CD14-positive monocyte (primary cell): ENCODE measurements at regions of chr7 and their contacts with region 1.

Region 1: GRCh38 chr7:156892821-156893706 is at the start of gene LMBR1:
- DNase-seq: peak; percentile 91 to 95 (median 94)
- H3K4me3 ChIP-seq: peak within 1 kb of the TSS; percentile 58 to 85 (median 78)
- H3K4me3 Mint-ChIP-seq: peak within 1 kb of the TSS; percentile 88 to 92
- H3K27ac ChIP-seq: peak within 1 kb of the TSS; percentile 85 to 92
- H3K27ac Mint-ChIP-seq: peak within 1 kb of the TSS; percentile 88 to 95 (median 93)
- H3K4me1 ChIP-seq: peaks cover 41 to 47% of the 10 kb centered on the region in 2 donors
- H3K4me1 Mint-ChIP-seq: peaks cover 49% of the 10 kb centered on the region
- H3K27me3 ChIP-seq: no peaks in the 10 kb centered on the region
- H3K27me3 Mint-ChIP-seq: peaks cover 0 to under 1% (median 0%) of the 10 kb centered on the region in 3 donors
- CTCF ChIP-seq: peak; percentile 80
- polyA plus RNA-seq, gene LMBR1: 14.8 to 24.4 (median 21.2) TPM

Region 2: DNA sequence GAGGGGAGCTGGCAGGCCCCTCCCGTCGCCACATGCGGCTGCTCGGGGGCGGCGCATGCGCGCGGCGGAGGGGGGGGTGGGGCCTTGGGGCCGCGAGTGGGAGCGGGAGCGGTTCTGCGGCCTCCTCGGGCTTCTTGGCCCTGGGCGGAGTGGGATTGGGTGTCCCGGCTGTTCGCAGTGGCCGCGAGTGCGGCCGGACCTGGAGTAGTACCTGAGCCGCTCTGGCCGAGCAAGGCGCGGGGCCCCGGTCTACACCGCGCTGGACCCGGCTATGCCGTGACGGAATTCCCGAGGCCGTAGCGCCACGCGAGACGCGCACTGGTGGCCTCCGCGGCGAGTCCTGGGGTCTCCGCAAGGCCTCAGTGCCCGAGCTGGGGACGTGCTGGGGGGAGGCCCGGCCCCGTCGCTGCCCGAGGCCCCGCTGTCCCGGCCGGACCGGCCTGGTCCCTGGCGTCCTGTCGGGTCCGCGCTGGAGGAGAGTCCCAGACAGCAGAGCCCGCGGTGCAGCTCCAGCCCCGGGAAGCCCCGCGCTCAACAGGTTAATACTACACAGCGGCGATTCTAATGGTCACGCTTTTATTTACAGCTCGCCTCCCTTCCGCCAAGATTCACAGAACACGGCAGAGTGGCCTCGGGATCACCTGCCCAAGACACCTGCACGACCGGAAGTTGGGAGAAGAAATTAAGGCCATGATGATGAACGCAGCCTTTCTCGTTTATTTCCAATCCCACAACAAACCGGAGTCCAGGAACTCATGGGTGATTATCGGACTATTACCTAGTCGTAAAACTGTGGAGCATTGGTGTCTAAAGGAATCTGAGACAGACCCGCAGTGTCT is 1889.5 kb before region 1 on chr7:
- intact Hi-C with region 1: loop called in 1 of 2 experiments (anchors 10 kb)
- DNase-seq: peak; percentile 73 to 79 (median 78)
- H3K4me3 ChIP-seq: peak overlapping the region; percentile 68 to 92 (median 74)
- H3K4me3 Mint-ChIP-seq: peak overlapping the region; percentile 89 to 95
- H3K27ac ChIP-seq: peak overlapping the region in 1 of 2 donors; percentile 83
- H3K27ac Mint-ChIP-seq: peak overlapping the region; percentile 15 to 84 (median 63)
- H3K4me1 ChIP-seq: peaks cover 16 to 18% of the 10 kb centered on the region in 2 donors
- H3K4me1 Mint-ChIP-seq: peaks cover 19% of the 10 kb centered on the region
- H3K27me3 ChIP-seq: no peaks in the 10 kb centered on the region
- H3K27me3 Mint-ChIP-seq: peaks cover 0 to 2% (median 1%) of the 10 kb centered on the region in 3 donors
- CTCF ChIP-seq: no peak

Region 3: DNA sequence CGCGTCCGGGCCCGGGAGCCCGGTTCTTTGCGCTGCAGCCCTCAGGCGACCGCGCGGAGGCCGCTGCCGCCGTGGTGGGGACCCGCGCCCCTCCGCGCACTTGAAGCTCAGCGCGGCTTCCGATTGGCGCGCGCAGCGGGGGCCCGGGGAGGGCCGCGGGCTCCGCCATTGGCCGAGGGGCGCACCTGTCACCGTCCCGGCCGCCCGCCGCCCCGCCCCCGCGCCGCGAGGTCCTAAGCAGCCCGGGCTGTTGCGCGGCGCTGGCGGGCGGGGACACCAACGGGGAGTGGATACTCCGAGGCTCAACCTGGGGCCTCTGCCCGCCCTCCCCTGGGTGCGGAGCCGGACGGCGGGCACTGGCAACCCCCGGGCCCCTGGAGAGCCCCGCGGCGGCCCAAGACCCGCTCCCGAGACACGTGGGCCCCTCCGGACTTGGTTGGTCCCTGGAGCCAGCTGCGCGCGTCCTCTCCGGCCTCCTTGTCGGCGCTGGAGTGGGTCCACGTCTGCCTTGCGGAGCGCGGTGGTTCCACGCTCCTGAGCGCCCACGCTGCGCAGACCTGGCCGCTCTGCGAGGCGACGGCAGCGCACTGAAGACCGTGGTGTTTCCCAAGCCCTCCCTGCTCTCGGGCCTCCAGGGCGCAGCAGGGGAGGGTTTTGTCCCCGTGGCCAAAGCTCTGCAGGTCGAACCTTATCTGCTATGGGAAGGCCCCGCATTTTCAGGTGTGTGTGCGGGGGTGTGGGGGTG is 117.7 kb after region 1 on chr7 and contains the start of gene MNX1:
- intact Hi-C with region 1: no loop called
- DNase-seq: no peak
- H3K4me3 ChIP-seq: no peak within 1 kb of the TSS
- H3K4me3 Mint-ChIP-seq: peak within 1 kb of the TSS in 1 of 2 donors; percentile 78
- H3K27ac ChIP-seq: no peak within 1 kb of the TSS
- H3K27ac Mint-ChIP-seq: no peak within 1 kb of the TSS
- H3K4me1 ChIP-seq: no peaks in the 10 kb centered on the region
- H3K4me1 Mint-ChIP-seq: no peaks in the 10 kb centered on the region
- H3K27me3 ChIP-seq: peaks cover 67 to 87% of the 10 kb centered on the region in 2 donors
- H3K27me3 Mint-ChIP-seq: peaks cover 87 to 95% (median 87%) of the 10 kb centered on the region in 3 donors
- CTCF ChIP-seq: no peak
- polyA plus RNA-seq, gene MNX1: not detected